ENCODE measurements at regions of chr22 and their contacts with region 1.

Region 1: GRCh38 chr22:36481393-36482168 is at the start of gene TXN2:
- DNase-seq: peak; percentile 94
- ATAC-seq: peak; percentile 87
- H3K4me3 Mint-ChIP-seq: peak within 1 kb of the TSS; percentile 92
- H3K27ac Mint-ChIP-seq: peak within 1 kb of the TSS; percentile 91
- H3K4me1 Mint-ChIP-seq: peaks cover 18% of the 10 kb centered on the region
- H3K27me3 Mint-ChIP-seq: no peaks in the 10 kb centered on the region
- CTCF ChIP-seq: no peak
- total RNA-seq, gene TXN2: 59.1 and 71.7 TPM in 2 replicates

Region 2: GRCh38 chr22:36415415-36416168 is 66.0 kb before region 1 on chr22:
- CTCF ChIA-PET with region 1: no interaction called
- POLR2A ChIA-PET with region 1: interaction called, 15 read pairs
- intact Hi-C with region 1: no loop called
- DNase-seq: no peak
- ATAC-seq: peak; percentile 25
- H3K4me3 Mint-ChIP-seq: peak overlapping the region; percentile 32
- H3K27ac Mint-ChIP-seq: peak overlapping the region; percentile 16
- H3K4me1 Mint-ChIP-seq: peaks cover 48% of the 10 kb centered on the region
- H3K27me3 Mint-ChIP-seq: no peaks in the 10 kb centered on the region
- CTCF ChIP-seq: no peak

Region 3: GRCh38 chr22:36470162-36470993 is 11.2 kb before region 1 on chr22:
- CTCF ChIA-PET with region 1: interaction called, 18 read pairs
- POLR2A ChIA-PET with region 1: interaction called, 11 read pairs
- intact Hi-C with region 1: no loop called
- DNase-seq: peak; percentile 62
- ATAC-seq: peak; percentile 96
- H3K4me3 Mint-ChIP-seq: no peak overlapping the region
- H3K27ac Mint-ChIP-seq: no peak overlapping the region
- H3K4me1 Mint-ChIP-seq: peaks cover 6% of the 10 kb centered on the region
- H3K27me3 Mint-ChIP-seq: no peaks in the 10 kb centered on the region
- CTCF ChIP-seq: no peak

Region 4: GRCh38 chr22:36506637-36507517 is 25.3 kb after region 1 on chr22 and contains the start of gene FOXRED2:
- CTCF ChIA-PET with region 1: interaction called, 6 read pairs
- POLR2A ChIA-PET with region 1: interaction called, 19 read pairs
- intact Hi-C with region 1: loop called (anchors 1 kb)
- DNase-seq: peak; percentile 91
- ATAC-seq: peak; percentile 96
- H3K4me3 Mint-ChIP-seq: peak within 1 kb of the TSS; percentile 76
- H3K27ac Mint-ChIP-seq: peak within 1 kb of the TSS; percentile 63
- H3K4me1 Mint-ChIP-seq: peaks cover 17% of the 10 kb centered on the region
- H3K27me3 Mint-ChIP-seq: no peaks in the 10 kb centered on the region
- CTCF ChIP-seq: no peak
- total RNA-seq, gene FOXRED2: 3.9 and 6.5 TPM in 2 replicates

Measured in activated B cell treated with CpG ODN at 0.5 μM for 24 hours (primary cell).